ENCODE measurements at regions of chr20 and their contacts with region 1.

Region 1: GRCh38 chr20:5703681-5704101 is 46.5 kb upstream of the SHLD1 start:
- DNase-seq: peak in 1 of 5 donors; percentile 23
- ATAC-seq: peak in 3 of 4 donors; percentile 45 to 83 (median 61)
- H3K4me3 ChIP-seq: peak overlapping the region in 3 of 12 donors; percentile 13 to 21 (median 14)
- H3K27ac ChIP-seq: peak overlapping the region in 10 of 12 donors; percentile 10 to 59 (median 28)
- H3K4me1 ChIP-seq: peaks cover 0 to 13% (median 5%) of the 10 kb centered on the region in 12 donors
- H3K27me3 ChIP-seq: no peaks in the 10 kb centered on the region
- CTCF ChIP-seq: no peak
- POLR2A ChIP-seq: no peak

Region 2: DNA sequence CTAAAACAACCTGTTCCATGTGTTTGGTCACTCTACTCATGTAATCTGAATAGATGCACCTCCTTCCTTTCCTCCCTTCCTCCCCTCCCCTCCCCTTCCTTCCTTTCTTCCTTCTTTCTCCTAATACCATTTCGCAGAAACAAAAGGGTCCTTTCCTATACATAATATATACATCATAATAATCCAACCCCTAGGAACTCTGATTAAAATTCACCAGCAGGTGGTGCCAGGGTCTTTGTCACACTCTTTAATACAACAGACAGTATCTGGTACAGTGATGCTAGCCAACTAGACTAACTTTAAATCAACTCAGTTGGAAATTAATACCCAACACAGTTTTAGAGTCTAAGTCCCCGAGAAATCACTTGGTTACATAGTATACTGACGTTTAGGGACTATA is 134.7 kb before region 1 on chr20:
- intact Hi-C with region 1: no loop called
- DNase-seq: peak in 1 of 5 donors; percentile 22
- ATAC-seq: peak in 2 of 4 donors; percentile 65 to 67
- H3K4me3 ChIP-seq: no peak overlapping the region
- H3K27ac ChIP-seq: peak overlapping the region in 1 of 12 donors; percentile 84
- H3K4me1 ChIP-seq: peaks cover 0 to 21% (median 0%) of the 10 kb centered on the region in 12 donors
- H3K27me3 ChIP-seq: no peaks in the 10 kb centered on the region
- CTCF ChIP-seq: peak; percentile 33 to 63 (median 48)
- POLR2A ChIP-seq: no peak

Region 3: GRCh38 chr20:5780846-5781217 is 77.1 kb after region 1 on chr20:
- intact Hi-C with region 1: loop called in 1 of 10 experiments (anchors 5 kb)
- DNase-seq: no peak
- ATAC-seq: no peak
- H3K4me3 ChIP-seq: no peak overlapping the region
- H3K27ac ChIP-seq: no peak overlapping the region
- H3K4me1 ChIP-seq: peaks cover 0 to 28% (median 5%) of the 10 kb centered on the region in 12 donors
- H3K27me3 ChIP-seq: no peaks in the 10 kb centered on the region
- CTCF ChIP-seq: no peak
- POLR2A ChIP-seq: no peak

Measured in heart left ventricle (tissue), 16 donors.